ENCODE measurements at regions of chr1 and their contacts with region 1.

Region 1: GRCh38 chr1:6359216-6360116 is 34.1 kb downstream of the ACOT7 start:
- DNase-seq: no peak
- H3K4me3 ChIP-seq: no peak overlapping the region
- CTCF ChIP-seq: no peak

Region 2: GRCh38 chr1:6065093-6065858 is 294.2 kb before region 1 on chr1:
- CTCF ChIA-PET with region 1: no interaction called
- POLR2A ChIA-PET with region 1: no interaction called
- DNase-seq: no peak
- H3K4me3 ChIP-seq: no peak overlapping the region
- CTCF ChIP-seq: no peak

Region 3: GRCh38 chr1:6343506-6344405 is 15.7 kb before region 1 on chr1:
- CTCF ChIA-PET with region 1: interaction called, 44 read pairs
- POLR2A ChIA-PET with region 1: no interaction called
- DNase-seq: peak; percentile 45
- H3K4me3 ChIP-seq: no peak overlapping the region
- CTCF ChIP-seq: peak; percentile 98

Region 4: DNA sequence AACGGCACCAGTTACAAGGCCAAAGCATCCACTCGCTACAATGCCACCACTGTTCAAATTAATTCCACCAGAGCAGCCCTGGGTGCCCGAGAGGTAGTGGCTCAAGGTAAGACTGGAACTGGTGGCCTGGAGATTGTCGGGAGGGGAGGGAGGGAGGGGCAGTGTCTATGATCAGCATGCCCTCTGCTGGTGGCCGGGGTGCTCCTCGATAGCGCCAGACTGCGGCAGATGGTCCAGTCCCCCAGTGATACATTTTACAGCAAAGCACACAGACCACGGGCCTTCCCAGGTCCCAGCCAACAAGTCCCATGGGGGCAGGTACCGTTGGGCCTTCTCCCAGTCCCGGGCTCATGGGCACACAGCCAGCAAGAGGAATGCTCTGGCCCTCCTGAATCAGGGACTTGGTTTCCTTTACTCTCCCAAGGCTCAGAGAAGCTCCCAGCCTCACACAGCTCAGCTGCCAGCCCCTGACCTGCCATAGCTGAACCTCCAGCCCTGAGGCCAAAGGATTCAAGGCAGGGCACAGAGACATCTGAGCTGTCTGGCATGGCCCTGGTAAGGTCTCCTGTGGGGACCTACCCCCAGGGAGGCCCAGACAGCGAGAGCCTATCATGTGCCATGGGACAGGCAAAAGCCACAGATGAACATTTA is 18.8 kb after region 1 on chr1:
- CTCF ChIA-PET with region 1: interaction called, 27 read pairs
- POLR2A ChIA-PET with region 1: no interaction called
- DNase-seq: no peak
- H3K4me3 ChIP-seq: no peak overlapping the region
- CTCF ChIP-seq: no peak

Region 5: GRCh38 chr1:6393400-6394187 is 34.1 kb after region 1 on chr1 and contains the start of gene ACOT7:
- CTCF ChIA-PET with region 1: interaction called, 175 read pairs
- POLR2A ChIA-PET with region 1: no interaction called
- DNase-seq: no peak
- H3K4me3 ChIP-seq: peak within 1 kb of the TSS; percentile 67
- CTCF ChIP-seq: peak; percentile 35

Region 6: DNA sequence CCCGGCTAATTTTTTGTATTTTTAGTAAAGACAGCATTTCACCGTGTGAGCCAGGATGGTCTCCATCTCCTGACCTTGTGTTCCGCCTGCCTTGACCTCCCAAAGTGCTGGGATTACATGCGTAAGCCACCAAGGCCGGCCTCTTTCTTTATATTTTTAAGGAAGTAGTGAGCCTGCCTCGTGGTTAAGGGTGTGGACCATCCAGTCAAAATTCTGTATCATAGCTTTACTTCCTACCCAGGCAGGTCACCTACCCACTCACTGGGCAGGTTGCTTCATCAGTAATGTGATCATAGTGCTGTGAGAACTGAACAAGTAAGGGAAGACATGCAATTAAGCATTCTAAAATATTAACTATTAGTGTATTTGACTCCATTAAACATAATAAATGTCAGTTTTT is 42.2 kb after region 1 on chr1:
- CTCF ChIA-PET with region 1: interaction called, 175 read pairs
- POLR2A ChIA-PET with region 1: no interaction called
- DNase-seq: no peak
- H3K4me3 ChIP-seq: no peak overlapping the region
- CTCF ChIP-seq: no peak

Region 7: GRCh38 chr1:6414443-6414844 is 55.0 kb after region 1 on chr1:
- CTCF ChIA-PET with region 1: interaction called, 175 read pairs
- POLR2A ChIA-PET with region 1: no interaction called
- DNase-seq: no peak
- H3K4me3 ChIP-seq: peak overlapping the region; percentile 27; the same call in 1 of the 2 replicates
- CTCF ChIP-seq: peak; percentile 73

Region 8: DNA sequence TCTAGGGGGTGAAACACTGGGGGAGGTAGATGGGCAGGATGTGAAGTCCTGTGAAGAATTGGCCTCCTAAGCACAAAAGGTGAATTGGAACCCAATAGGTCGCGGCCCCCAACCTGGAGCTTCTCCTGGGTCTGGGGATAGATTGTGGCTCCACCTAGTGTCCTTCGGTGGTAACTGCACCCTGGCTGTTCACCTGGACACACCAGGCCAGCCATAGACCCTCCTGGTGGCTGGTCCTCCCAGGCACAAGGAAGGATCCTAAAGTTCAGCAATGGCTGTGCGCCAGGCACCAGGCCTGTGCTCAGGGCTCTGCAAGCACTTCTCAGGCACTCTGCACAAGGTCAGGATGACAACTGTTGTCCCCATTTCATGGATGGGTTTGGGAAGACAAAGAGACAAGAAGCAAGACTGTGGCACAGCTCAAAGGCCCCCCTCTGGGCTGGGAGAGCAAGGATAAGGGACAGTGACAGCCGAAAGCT is 78.6 kb after region 1 on chr1:
- CTCF ChIA-PET with region 1: interaction called, 107 read pairs
- POLR2A ChIA-PET with region 1: no interaction called
- DNase-seq: no peak
- H3K4me3 ChIP-seq: no peak overlapping the region
- CTCF ChIP-seq: peak; percentile 88

Measured in AG04449 (cell line).